Caco-2 (cell line): ENCODE measurements at regions of chr2 and their contacts with region 1.

Region 1: DNA sequence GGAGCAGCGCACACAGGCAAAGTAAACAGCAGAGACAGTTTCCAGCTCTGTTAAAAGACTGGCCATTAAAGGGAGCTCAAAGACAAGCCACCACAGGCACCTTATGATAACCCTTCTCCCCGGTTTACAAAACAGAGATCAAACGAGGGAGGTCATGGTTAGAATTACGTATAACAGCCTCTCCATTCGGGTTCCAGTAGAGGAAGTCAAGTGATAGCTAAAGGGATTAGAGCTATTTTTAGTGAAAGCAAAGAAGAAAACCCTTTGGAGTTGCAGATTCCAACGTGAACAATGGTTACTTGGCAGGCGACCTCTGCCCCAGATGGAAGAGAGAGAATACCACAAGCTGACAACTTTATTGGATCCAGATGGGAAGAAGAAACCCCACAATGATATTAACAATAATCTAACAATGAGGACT is 31.2 kb upstream of the EDAR start:
- DNase-seq: peak; percentile 45 to 47
- H3K4me3 ChIP-seq: no peak overlapping the region
- H3K4me3 Mint-ChIP-seq: peak overlapping the region; percentile 19
- H3K27ac Mint-ChIP-seq: peak overlapping the region; percentile 26
- H3K4me1 ChIP-seq: peaks cover 31% of the 10 kb centered on the region
- H3K4me1 Mint-ChIP-seq: peaks cover 10% of the 10 kb centered on the region
- H3K27me3 ChIP-seq: no peaks in the 10 kb centered on the region
- H3K27me3 Mint-ChIP-seq: no peaks in the 10 kb centered on the region
- CTCF ChIP-seq: no peak

Region 2: DNA sequence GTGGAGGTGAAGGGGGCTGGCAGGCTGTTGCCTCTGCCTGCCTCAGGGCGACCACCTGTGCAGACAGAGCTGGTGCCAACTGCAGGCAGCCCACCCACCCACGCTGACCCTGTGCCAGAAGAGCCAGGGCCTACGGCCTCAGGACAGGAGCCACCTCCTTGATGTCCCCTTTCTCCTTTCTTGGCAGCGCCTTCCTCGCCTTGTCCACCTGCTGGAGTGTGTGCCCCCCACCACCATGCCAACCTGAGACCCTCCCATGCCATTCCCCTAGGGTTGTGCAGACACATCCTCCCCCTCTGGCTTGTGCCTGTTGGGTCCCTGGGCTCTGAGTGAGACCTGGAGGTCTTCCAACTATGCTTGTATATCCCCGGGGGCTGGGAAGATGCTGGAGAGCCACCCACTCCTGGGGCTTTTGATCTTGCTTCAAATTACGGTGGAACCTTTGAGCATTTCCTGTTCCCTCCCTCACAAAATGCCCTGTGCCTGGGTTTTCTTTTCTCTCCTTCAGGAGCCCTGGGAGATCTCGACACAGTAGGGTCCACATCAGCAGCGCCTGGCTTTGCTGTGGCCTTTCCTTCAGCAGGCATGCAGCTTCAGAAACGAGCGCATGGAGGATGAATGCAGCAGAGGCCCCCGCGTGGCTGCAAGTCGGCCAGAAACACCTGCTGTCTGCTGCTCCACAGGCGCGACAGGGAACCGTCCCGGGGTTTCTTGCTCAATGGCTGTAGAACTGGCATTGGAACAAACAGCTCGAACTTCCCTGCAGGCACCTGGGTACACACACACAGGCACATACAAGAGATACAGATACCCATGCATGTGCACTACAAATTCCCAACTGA is 42.9 kb after region 1 on chr2:
- CTCF ChIA-PET with region 1: no interaction called
- POLR2A ChIA-PET with region 1: no interaction called
- intact Hi-C with region 1: loop called (anchors 1 kb)
- DNase-seq: peak in 1 of 2 experiments; percentile 18
- H3K4me3 ChIP-seq: no peak overlapping the region
- H3K4me3 Mint-ChIP-seq: no peak overlapping the region
- H3K27ac Mint-ChIP-seq: peak overlapping the region; percentile 75
- H3K4me1 ChIP-seq: peaks cover 67% of the 10 kb centered on the region
- H3K4me1 Mint-ChIP-seq: peaks cover 45% of the 10 kb centered on the region
- H3K27me3 ChIP-seq: no peaks in the 10 kb centered on the region
- H3K27me3 Mint-ChIP-seq: no peaks in the 10 kb centered on the region
- CTCF ChIP-seq: no peak

Region 3: GRCh38 chr2:109069331-109070194 is 49.3 kb after region 1 on chr2:
- CTCF ChIA-PET with region 1: interaction called, 3 read pairs
- POLR2A ChIA-PET with region 1: interaction called, 4 read pairs
- intact Hi-C with region 1: loop called (anchors 1 kb)
- DNase-seq: peak; percentile 90 to 94
- H3K4me3 ChIP-seq: no peak overlapping the region
- H3K4me3 Mint-ChIP-seq: peak overlapping the region; percentile 65
- H3K27ac Mint-ChIP-seq: peak overlapping the region; percentile 97
- H3K4me1 ChIP-seq: peaks cover 58% of the 10 kb centered on the region
- H3K4me1 Mint-ChIP-seq: peaks cover 34% of the 10 kb centered on the region
- H3K27me3 ChIP-seq: no peaks in the 10 kb centered on the region
- H3K27me3 Mint-ChIP-seq: no peaks in the 10 kb centered on the region
- CTCF ChIP-seq: no peak